Activated B cell treated with CpG ODN at 0.5 μM for 24 hours (primary cell): ENCODE measurements at regions of chr12 and their contacts with region 1.

Region 1: GRCh38 chr12:113196996-113197395 is 11.5 kb downstream of the RITA1 start:
- DNase-seq: peak; percentile 33
- ATAC-seq: peak; percentile 99
- H3K4me3 Mint-ChIP-seq: peak overlapping the region; percentile 28
- H3K27ac Mint-ChIP-seq: peak overlapping the region; percentile 61
- H3K4me1 Mint-ChIP-seq: peaks cover 16% of the 10 kb centered on the region
- H3K27me3 Mint-ChIP-seq: no peaks in the 10 kb centered on the region
- CTCF ChIP-seq: no peak

Region 2: GRCh38 chr12:113184900-113185773 is 11.9 kb before region 1 on chr12 and contains the starts of genes DDX54 and RITA1:
- CTCF ChIA-PET with region 1: interaction called, 4 read pairs
- POLR2A ChIA-PET with region 1: interaction called, 27 read pairs
- intact Hi-C with region 1: no loop called
- DNase-seq: peak; percentile 87
- ATAC-seq: peak; percentile 83
- H3K4me3 Mint-ChIP-seq: peak within 1 kb of the TSS; percentile 93
- H3K27ac Mint-ChIP-seq: peak within 1 kb of the TSS; percentile 94
- H3K4me1 Mint-ChIP-seq: peaks cover 39% of the 10 kb centered on the region
- H3K27me3 Mint-ChIP-seq: no peaks in the 10 kb centered on the region
- CTCF ChIP-seq: no peak
- total RNA-seq, gene DDX54: 115 TPM in 2 replicates
- total RNA-seq, gene RITA1: 15.5 and 18.2 TPM in 2 replicates

Region 3: GRCh38 chr12:113221181-113221997 is 24.4 kb after region 1 on chr12 and contains the start of gene TPCN1:
- CTCF ChIA-PET with region 1: interaction called, 6 read pairs
- POLR2A ChIA-PET with region 1: interaction called, 90 read pairs
- intact Hi-C with region 1: no loop called
- DNase-seq: peak; percentile 95
- ATAC-seq: peak; percentile 91
- H3K4me3 Mint-ChIP-seq: peak within 1 kb of the TSS; percentile 94
- H3K27ac Mint-ChIP-seq: peak within 1 kb of the TSS; percentile 94
- H3K4me1 Mint-ChIP-seq: peaks cover 45% of the 10 kb centered on the region
- H3K27me3 Mint-ChIP-seq: no peaks in the 10 kb centered on the region
- CTCF ChIP-seq: no peak
- total RNA-seq, gene TPCN1: 107 and 126 TPM in 2 replicates

Region 4: DNA sequence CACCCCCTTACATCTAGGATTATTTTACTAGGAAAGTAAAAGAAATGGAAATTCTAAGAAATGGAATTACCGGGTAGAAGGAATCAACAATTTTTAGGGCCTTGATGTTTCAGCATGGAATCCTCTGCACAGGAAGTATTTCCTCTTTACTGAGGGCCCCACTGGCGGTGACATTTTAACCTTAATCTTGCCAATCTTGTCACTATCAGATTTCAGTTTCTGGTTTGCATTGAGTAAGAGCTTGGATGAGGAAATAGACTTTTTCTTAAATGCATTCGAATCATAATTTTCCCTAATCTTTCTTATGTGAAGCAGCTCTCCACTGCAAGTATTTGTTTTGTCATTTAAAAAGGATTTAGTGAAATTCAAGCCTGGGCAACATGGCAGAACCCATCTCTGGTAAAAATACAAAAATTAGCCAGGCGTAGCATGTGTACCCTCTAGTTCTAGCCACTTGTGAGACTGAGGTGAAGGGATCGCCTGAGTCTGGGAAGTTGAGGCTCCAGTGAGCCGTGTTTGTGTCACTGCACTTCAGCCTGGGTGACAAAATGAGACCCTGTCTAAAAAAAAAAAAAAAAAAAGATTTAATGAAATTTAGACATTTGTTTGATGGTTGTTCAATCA is 65.0 kb after region 1 on chr12:
- CTCF ChIA-PET with region 1: no interaction called
- POLR2A ChIA-PET with region 1: interaction called, 10 read pairs
- intact Hi-C with region 1: loop called (anchors 2 kb)
- DNase-seq: no peak
- ATAC-seq: no peak
- H3K4me3 Mint-ChIP-seq: no peak overlapping the region
- H3K27ac Mint-ChIP-seq: no peak overlapping the region
- H3K4me1 Mint-ChIP-seq: peaks cover 26% of the 10 kb centered on the region
- H3K27me3 Mint-ChIP-seq: no peaks in the 10 kb centered on the region
- CTCF ChIP-seq: no peak

Region 5: DNA sequence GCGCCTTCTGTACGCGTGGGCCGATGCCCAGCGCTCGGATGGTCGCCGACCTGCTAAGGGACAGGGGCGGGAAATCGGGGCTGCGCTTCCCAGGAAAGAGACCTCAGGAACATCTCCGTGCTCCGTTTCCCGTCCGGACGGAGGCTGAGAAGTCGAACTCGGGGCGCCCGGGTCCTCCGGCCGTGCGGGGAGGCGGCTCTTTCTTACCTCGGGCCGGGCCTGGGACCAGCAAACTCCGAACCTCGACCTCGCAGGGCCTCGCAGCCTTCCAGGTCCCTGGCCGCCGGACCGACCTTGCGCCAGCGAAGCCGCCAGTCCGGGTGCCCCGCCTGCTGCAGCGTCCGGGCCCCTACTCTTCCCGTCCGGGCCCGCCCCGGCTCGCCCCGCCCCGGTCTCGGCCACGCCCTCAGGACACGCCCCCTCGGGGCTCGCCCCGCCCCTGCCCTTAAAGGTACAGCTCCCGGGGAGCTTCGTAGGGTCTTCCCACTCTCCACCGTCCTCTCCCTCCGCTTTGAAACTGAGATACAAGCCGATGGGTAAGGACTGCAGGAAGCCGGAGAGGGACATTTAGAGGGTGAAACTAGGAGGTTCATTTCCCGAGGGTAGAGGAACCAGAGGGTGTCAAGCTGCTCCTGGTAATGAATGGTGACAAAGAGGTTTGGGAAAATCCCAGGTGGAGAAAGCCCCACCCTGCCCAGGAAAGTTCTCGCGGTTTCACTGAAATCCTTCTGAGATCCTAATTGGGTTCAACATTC is 138.0 kb after region 1 on chr12 and contains the start of gene SLC8B1:
- CTCF ChIA-PET with region 1: no interaction called
- POLR2A ChIA-PET with region 1: no interaction called
- intact Hi-C with region 1: loop called (anchors 2 kb)
- DNase-seq: peak; percentile 89
- ATAC-seq: peak; percentile 100
- H3K4me3 Mint-ChIP-seq: peak within 1 kb of the TSS; percentile 95
- H3K27ac Mint-ChIP-seq: peak within 1 kb of the TSS; percentile 71
- H3K4me1 Mint-ChIP-seq: peaks cover 35% of the 10 kb centered on the region
- H3K27me3 Mint-ChIP-seq: no peaks in the 10 kb centered on the region
- CTCF ChIP-seq: no peak
- total RNA-seq, gene SLC8B1: 14.3 and 22.4 TPM in 2 replicates

Region 6: GRCh38 chr12:113601656-113602263 is 404.8 kb after region 1 on chr12:
- CTCF ChIA-PET with region 1: no interaction called
- POLR2A ChIA-PET with region 1: no interaction called
- intact Hi-C with region 1: no loop called
- DNase-seq: no peak
- ATAC-seq: no peak
- H3K4me3 Mint-ChIP-seq: no peak overlapping the region
- H3K27ac Mint-ChIP-seq: no peak overlapping the region
- H3K4me1 Mint-ChIP-seq: no peaks in the 10 kb centered on the region
- H3K27me3 Mint-ChIP-seq: peaks cover 4% of the 10 kb centered on the region
- CTCF ChIP-seq: no peak

Region 7: GRCh38 chr12:113912760-113913329 is 715.8 kb after region 1 on chr12:
- CTCF ChIA-PET with region 1: no interaction called
- POLR2A ChIA-PET with region 1: no interaction called
- intact Hi-C with region 1: loop called (anchors 1 kb)
- DNase-seq: peak; percentile 32
- ATAC-seq: peak; percentile 57
- H3K4me3 Mint-ChIP-seq: no peak overlapping the region
- H3K27ac Mint-ChIP-seq: no peak overlapping the region
- H3K4me1 Mint-ChIP-seq: no peaks in the 10 kb centered on the region
- H3K27me3 Mint-ChIP-seq: no peaks in the 10 kb centered on the region
- CTCF ChIP-seq: peak; percentile 15